Left lung (tissue), 14 donors: ENCODE measurements at regions of chr19 and their contacts with region 1.

Region 1: DNA sequence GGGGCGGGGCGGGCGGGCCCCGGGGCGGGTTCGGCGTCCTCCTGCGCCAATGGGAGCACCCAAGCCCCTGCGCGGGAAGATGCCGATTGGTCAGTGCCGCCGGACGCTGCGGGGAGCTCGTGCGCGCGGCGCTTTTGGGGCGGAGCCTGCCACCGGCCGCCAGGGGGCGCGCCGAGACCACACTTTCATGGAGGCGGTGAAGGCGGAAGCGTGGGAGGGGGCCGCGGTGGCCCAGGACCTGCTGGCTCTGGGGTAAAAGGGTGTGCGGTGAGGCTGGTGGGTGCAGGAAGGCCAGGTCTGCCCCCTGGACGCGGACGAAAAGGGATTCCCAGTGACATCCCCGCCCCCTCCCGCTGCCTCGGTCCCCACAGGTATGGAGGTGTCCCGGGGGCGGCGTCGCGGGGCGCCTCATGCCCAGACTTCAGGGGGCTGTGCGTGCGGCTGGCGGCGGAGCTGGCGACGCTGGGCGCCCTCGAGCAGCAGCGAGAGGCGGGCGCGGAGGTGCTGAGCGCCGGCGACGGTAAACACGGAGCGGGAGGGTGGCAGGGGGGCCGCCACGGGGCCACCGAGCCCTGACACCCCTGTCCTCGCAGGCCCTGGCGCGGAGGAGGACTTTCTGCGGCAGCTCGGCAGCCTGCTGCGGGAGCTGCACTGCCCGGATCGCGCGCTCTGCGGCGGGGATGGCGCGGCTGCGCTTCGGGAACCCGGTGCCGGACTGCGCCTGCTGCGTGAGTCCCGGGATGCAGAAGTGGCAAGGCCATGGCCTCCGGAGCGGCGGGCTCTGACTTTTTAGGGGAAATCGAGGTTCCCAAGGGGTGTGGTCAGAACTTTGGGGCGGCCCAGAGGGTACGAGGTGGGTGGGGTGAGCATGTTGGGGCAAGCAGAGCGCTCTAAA is at the start of gene FAM98C:
- DNase-seq: peak; percentile 96 to 98 (median 97)
- ATAC-seq: peak; percentile 99
- H3K4me3 ChIP-seq: peak within 1 kb of the TSS; percentile 76 to 96
- H3K27ac ChIP-seq: peak within 1 kb of the TSS; percentile 74 to 94
- H3K4me1 ChIP-seq: peaks cover 0 to 13% of the 10 kb centered on the region in 2 donors
- H3K27me3 ChIP-seq: peaks cover 5 to 28% of the 10 kb centered on the region in 2 donors
- CTCF ChIP-seq: peak; percentile 98 to 100
- polyA plus RNA-seq, gene FAM98C: 13.3 to 21.2 (median 19.0) TPM

Region 2: DNA sequence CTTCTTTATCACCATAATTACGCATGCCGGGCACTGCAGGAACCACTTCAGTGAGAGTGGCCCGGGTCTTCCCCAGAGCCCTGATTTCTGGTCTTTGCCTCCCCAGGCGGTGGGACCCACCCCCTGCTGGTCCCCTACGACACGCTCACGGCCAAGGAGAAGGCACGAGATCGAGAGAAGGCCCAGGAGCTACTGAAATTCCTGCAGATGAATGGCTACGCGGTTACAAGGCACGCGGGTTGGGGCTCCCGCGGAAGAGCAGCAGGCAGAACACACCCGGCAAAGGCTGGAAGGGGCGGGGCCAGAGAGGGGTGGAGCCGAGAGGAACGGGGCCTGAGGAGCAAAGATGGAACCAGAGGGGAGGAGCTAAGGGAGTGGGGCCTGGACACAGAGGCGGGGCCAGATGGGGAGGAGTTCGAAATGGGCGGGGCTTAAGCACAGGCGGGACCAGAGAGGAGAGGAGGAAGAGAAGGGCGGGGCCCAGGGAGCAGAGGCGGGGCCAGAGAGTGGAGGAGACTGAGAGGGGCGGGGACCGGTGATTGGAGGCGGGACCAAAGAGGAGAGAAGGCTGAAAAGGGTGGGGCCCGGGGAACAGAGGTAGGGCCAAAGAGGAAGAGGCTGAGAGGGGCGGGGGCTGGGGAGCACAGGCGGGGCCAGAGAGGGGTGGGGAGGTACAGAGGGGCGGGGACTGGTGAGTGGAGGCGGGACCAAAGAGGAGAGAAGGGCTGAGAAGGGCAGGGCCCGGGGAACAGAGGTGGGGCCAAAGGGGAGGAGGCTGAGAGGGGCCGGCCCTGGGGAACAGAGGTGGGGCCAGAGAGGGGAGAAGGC is 103.7 kb after region 1 on chr19:
- intact Hi-C with region 1: no loop called
- DNase-seq: peak in 3 of 4 donors; percentile 37 to 92 (median 88)
- ATAC-seq: peak; percentile 97
- H3K4me3 ChIP-seq: no peak overlapping the region
- H3K27ac ChIP-seq: no peak overlapping the region
- H3K4me1 ChIP-seq: no peaks in the 10 kb centered on the region
- H3K27me3 ChIP-seq: peaks cover 0 to 20% of the 10 kb centered on the region in 2 donors
- CTCF ChIP-seq: no peak

Region 3: GRCh38 chr19:38618590-38619360 is 215.6 kb after region 1 on chr19 and contains the start of gene EIF3K:
- intact Hi-C with region 1: loop called in 1 of 2 experiments (anchors 10 kb)
- DNase-seq: peak; percentile 99 to 100 (median 100)
- ATAC-seq: peak; percentile 95
- H3K4me3 ChIP-seq: peak within 1 kb of the TSS; percentile 75 to 90
- H3K27ac ChIP-seq: peak within 1 kb of the TSS; percentile 56 to 84
- H3K4me1 ChIP-seq: peaks cover 9 to 28% of the 10 kb centered on the region in 2 donors
- H3K27me3 ChIP-seq: no peaks in the 10 kb centered on the region
- CTCF ChIP-seq: peak in 1 of 2 donors; percentile 7
- polyA plus RNA-seq, gene EIF3K: 249 to 284 (median 276) TPM